HCT116 (cell line): ENCODE measurements at regions of chr19 and their contacts with region 1.

Region 1: GRCh38 chr19:42184401-42184861 is 33.0 kb downstream of the DEDD2 start:
- DNase-seq: peak; percentile 64
- ATAC-seq: peak; percentile 96
- H3K4me3 ChIP-seq: no peak overlapping the region
- H3K27ac ChIP-seq: no peak overlapping the region
- H3K4me1 ChIP-seq: peaks cover 0 to 6% of the 10 kb centered on the region in 2 experiments; a peak in 1 of 4 replicates
- H3K27me3 ChIP-seq: peaks cover 10% of the 10 kb centered on the region; the same call in 1 of the 2 replicates
- CTCF ChIP-seq: peak; percentile 91 to 95 (median 92)
- POLR2A ChIP-seq: no peak
- RAD21 ChIP-seq: peak; percentile 80

Region 2: GRCh38 chr19:42132851-42133528 is 51.4 kb before region 1 on chr19:
- CTCF ChIA-PET with region 1: interaction called, 6 read pairs
- POLR2A ChIA-PET with region 1: no interaction called
- RAD21 ChIA-PET with region 1: interaction called in 1 of 2 experiments, 3 read pairs
- intact Hi-C with region 1: loop called (anchors 1 kb)
- DNase-seq: peak; percentile 13
- ATAC-seq: peak; percentile 93
- H3K4me3 ChIP-seq: peak overlapping the region in 1 of 2 experiments; percentile 13; a peak in 1 of 4 replicates
- H3K27ac ChIP-seq: no peak overlapping the region
- H3K4me1 ChIP-seq: peaks cover 2 to 9% of the 10 kb centered on the region in 2 experiments; a peak in 2 of 4 replicates
- H3K27me3 ChIP-seq: peaks cover 14% of the 10 kb centered on the region
- CTCF ChIP-seq: peak; percentile 81 to 94 (median 92)
- POLR2A ChIP-seq: no peak
- RAD21 ChIP-seq: peak; percentile 98

Region 3: DNA sequence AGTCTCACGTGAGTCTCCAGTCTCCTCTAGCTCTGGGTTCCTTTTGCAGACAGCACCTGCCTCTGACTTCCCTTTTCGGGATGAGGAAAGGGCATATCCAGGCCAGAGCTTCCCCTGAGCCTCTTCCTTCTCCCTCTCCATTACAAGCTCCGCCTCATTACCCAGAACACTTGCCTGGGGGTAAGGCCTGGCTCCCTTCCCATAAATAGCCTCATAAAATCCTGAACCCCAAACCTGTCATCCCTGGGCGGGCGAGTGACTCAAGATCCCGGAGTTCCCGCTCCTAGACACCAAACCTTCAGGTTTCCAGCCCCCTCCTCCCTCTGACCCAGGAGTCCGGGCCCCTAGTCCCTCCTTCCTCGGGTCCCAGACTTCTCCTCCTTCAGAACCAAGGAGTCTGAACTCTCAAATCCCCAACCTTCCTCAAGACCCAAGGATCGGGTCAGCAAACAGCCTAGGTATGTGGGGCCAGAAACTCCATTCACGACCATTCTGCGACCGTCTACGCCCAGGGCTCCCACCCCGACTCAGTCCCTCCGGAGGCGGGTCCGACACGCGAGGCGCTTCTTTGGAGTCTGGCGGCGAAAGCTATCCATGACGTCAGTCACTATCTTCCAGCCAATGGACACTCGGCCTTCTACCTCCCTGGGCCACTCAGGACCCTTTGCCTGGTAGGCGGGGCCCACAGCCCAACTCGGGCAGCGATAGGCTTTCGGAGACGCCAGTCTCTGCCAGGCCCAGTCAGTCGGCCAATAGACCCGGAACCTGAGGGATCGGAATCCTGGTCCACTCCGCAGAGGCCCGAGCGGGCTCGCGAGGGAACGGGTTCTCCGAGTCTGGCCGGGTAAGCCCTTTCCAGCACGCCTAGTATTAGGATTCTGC is 212.2 kb after region 1 on chr19:
- CTCF ChIA-PET with region 1: no interaction called
- POLR2A ChIA-PET with region 1: no interaction called
- RAD21 ChIA-PET with region 1: no interaction called
- intact Hi-C with region 1: no loop called
- DNase-seq: peak; percentile 98
- ATAC-seq: peak; percentile 95
- H3K4me3 ChIP-seq: peak overlapping the region; percentile 88 to 90
- H3K27ac ChIP-seq: peak overlapping the region; percentile 82
- H3K4me1 ChIP-seq: peaks cover 10 to 39% of the 10 kb centered on the region in 2 experiments
- H3K27me3 ChIP-seq: no peaks in the 10 kb centered on the region
- CTCF ChIP-seq: no peak
- POLR2A ChIP-seq: peak; percentile 94
- RAD21 ChIP-seq: no peak